Heart left ventricle (tissue), 16 donors: ENCODE measurements at regions of chr15 and their contacts with region 1.

Region 1: DNA sequence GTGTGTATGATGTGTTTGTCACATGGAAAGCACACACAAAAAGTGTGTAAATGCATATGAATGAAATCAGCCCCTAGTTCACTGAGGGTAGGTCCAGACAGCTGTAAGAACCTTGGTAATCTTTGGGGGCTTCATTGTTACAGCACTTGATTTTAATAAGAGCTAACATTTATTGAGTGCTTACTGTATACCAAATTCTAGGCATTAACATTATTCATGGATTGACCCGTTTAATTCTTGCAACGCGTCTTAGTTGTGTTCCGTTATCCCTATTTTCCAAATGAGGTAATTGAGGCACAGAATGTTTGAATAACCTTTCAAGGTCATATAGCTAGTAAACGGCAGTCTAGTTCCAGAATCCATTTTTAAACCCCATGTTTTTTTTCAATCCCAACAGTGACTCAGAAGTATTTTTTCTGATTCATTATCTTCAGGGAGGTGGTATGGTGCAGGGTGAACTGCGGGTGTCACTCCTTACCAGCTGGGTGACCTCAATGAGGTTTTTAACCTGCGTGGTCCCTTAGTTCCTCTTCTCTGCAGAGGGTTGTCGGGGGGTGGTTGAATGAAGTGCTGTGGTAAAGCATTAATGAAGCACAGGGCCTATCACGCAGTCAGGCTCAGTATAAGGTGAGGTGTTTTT is 14.2 kb downstream of the RAB8B start:
- DNase-seq: no peak
- ATAC-seq: no peak
- H3K4me3 ChIP-seq: no peak overlapping the region
- H3K27ac ChIP-seq: no peak overlapping the region
- H3K4me1 ChIP-seq: peaks cover 0 to 75% (median 5%) of the 10 kb centered on the region in 12 donors
- H3K27me3 ChIP-seq: no peaks in the 10 kb centered on the region
- CTCF ChIP-seq: no peak
- POLR2A ChIP-seq: no peak

Region 2: GRCh38 chr15:62847900-62848489 is 355.6 kb before region 1 on chr15:
- intact Hi-C with region 1: no loop called
- DNase-seq: peak; percentile 64 to 84 (median 75)
- ATAC-seq: peak; percentile 35 to 80 (median 73)
- H3K4me3 ChIP-seq: no peak overlapping the region
- H3K27ac ChIP-seq: peak overlapping the region in 3 of 12 donors; percentile 3 to 58 (median 44)
- H3K4me1 ChIP-seq: peaks cover 0 to 48% (median 15%) of the 10 kb centered on the region in 12 donors
- H3K27me3 ChIP-seq: no peaks in the 10 kb centered on the region
- CTCF ChIP-seq: peak; percentile 71 to 84 (median 76)
- POLR2A ChIP-seq: no peak

Region 3: GRCh38 chr15:63093486-63094205 is 109.9 kb before region 1 on chr15:
- intact Hi-C with region 1: no loop called
- DNase-seq: peak; percentile 81 to 87 (median 83)
- ATAC-seq: peak; percentile 91 to 95 (median 92)
- H3K4me3 ChIP-seq: no peak overlapping the region
- H3K27ac ChIP-seq: peak overlapping the region in 6 of 12 donors; percentile 41 to 67 (median 49)
- H3K4me1 ChIP-seq: peaks cover 0 to 28% (median 17%) of the 10 kb centered on the region in 12 donors
- H3K27me3 ChIP-seq: no peaks in the 10 kb centered on the region
- CTCF ChIP-seq: peak; percentile 75 to 96 (median 88)
- POLR2A ChIP-seq: no peak

Region 4: GRCh38 chr15:63218100-63218808 is 14.7 kb after region 1 on chr15:
- intact Hi-C with region 1: no loop called
- DNase-seq: no peak
- ATAC-seq: peak; percentile 23 to 86 (median 66)
- H3K4me3 ChIP-seq: no peak overlapping the region
- H3K27ac ChIP-seq: peak overlapping the region in 6 of 12 donors; percentile 6 to 33 (median 24)
- H3K4me1 ChIP-seq: peaks cover 5 to 73% (median 31%) of the 10 kb centered on the region in 12 donors
- H3K27me3 ChIP-seq: no peaks in the 10 kb centered on the region
- CTCF ChIP-seq: no peak
- POLR2A ChIP-seq: no peak

Region 5: DNA sequence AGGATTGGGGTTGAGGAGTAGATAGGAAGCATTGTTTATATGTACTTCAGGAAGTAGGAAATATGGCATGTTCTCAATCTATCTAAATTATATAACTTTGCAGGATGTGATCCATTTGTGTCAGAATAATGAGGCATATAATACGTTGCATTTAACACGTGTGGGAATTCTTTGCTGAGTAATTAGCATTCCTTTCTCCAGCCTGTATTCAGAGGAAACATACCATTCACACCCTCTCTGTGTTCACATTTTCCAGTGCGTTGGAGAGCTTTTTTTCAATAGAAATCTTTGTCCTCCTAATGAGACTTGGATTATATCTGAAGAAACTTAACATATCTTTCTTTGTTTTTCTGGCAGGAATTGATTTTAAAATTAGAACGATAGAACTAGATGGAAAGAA is 40.8 kb after region 1 on chr15:
- intact Hi-C with region 1: loop called in 1 of 10 experiments (anchors 5 kb)
- DNase-seq: no peak
- ATAC-seq: peak in 2 of 4 donors; percentile 22 to 70
- H3K4me3 ChIP-seq: no peak overlapping the region
- H3K27ac ChIP-seq: peak overlapping the region; percentile 31 to 69 (median 48)
- H3K4me1 ChIP-seq: peaks cover 0 to 54% (median 15%) of the 10 kb centered on the region in 12 donors
- H3K27me3 ChIP-seq: no peaks in the 10 kb centered on the region
- CTCF ChIP-seq: no peak
- POLR2A ChIP-seq: no peak

Region 6: GRCh38 chr15:63264688-63265302 is 61.2 kb after region 1 on chr15:
- intact Hi-C with region 1: loop called in 1 of 10 experiments (anchors 5 kb)
- DNase-seq: no peak
- ATAC-seq: no peak
- H3K4me3 ChIP-seq: no peak overlapping the region
- H3K27ac ChIP-seq: no peak overlapping the region
- H3K4me1 ChIP-seq: peaks cover 0 to 10% (median 0%) of the 10 kb centered on the region in 12 donors
- H3K27me3 ChIP-seq: no peaks in the 10 kb centered on the region
- CTCF ChIP-seq: no peak
- POLR2A ChIP-seq: no peak

Region 7: GRCh38 chr15:63668601-63669000 is 465.0 kb after region 1 on chr15:
- intact Hi-C with region 1: no loop called
- DNase-seq: no peak
- ATAC-seq: no peak
- H3K4me3 ChIP-seq: peak overlapping the region in 1 of 12 donors; percentile 30
- H3K27ac ChIP-seq: peak overlapping the region in 1 of 12 donors; percentile 79
- H3K4me1 ChIP-seq: peaks cover 0 to 16% (median 0%) of the 10 kb centered on the region in 12 donors
- H3K27me3 ChIP-seq: no peaks in the 10 kb centered on the region
- CTCF ChIP-seq: no peak
- POLR2A ChIP-seq: no peak